ENCODE measurements at regions of chr13 and their contacts with region 1.

Region 1: DNA sequence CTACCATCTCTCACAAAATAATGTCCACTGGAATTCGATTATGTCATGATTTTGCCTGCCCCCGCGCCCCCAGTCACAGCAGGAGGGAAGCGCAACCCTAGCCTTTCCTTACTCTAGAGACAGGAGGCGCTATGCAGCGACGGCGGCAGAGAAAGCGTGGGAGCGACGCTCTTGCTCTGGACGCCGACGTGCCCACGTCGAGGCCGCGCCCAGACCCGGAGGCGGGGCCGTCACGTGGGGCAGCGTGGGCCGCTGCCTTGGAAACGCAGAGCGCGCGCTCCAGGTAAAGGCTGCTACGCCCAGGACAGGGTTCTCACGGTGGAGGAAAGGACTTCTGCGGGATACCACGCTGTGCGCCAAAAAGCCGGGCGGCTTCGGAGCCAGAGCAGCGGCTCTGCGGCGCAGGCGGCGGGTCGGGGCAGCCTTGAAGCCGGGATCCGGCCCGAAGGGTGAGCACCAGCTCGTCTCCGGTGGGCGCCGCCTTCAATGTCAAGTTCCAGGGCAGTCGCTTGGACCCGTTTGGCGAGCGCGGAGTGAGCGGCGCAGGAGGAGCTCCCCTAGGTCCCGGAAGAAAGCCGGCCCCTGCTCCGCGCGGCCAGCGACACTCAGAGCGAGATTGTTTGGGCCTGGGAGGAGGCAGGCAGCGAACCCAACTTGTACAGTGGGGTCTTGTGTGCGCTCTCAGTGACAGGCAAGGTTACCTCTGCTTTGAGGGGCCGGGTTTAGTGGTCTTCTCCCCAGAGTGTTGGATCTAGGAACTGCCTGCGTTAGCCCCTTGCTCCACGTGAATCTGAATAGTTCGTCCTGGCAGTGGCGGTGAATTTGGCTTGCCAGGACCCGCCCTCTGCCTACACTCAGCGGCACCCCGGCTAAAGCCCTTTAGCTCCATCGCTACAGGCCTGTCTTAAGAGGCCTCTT is 121.7 kb downstream of the MRPL57 start:
- DNase-seq: peak; percentile 90
- H3K4me3 ChIP-seq: peak overlapping the region; percentile 54 to 81 (median 70)
- H3K27ac ChIP-seq: no peak overlapping the region
- H3K4me1 ChIP-seq: peaks cover 12% of the 10 kb centered on the region
- H3K27me3 ChIP-seq: no peaks in the 10 kb centered on the region
- CTCF ChIP-seq: peak; percentile 89 to 90
- POLR2A ChIP-seq: peak; percentile 16

Region 2: DNA sequence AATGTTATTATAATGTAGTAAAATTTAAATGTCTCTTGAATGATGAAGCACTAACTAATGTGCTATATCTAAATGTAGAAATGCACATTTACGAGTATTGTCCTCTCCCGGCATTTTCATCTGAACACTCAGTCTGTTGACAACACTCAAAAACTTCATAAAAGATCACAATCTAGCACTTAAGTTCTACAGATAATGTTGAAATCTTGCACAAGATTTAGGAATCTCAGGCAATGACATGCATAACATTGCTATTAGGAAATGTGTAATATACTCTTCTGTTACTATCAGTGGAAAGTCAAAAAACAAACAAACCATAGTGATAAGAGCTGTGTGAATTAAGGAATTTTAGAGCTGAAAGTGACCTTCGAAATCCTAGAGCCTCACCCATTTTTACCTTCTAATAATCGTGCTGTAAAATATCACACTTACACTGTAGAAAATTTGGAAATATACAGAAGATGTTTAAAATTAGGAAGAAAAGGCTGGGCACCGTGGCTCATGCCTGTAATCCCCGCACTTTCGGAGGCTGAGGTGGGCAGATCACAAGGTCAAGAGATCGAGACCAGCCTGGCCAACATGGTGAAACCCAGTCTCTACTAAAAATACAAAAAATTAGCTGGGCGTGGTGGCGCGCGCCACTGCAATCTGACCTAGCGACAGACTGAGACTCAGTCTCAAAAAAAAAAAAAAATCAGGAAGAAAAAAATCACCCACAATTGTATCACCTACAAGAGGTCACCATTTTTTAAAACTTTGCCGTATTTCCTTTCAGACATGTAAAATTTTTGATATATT is 357.9 kb before region 1 on chr13:
- CTCF ChIA-PET with region 1: interaction called, 15 read pairs
- POLR2A ChIA-PET with region 1: interaction called, 11 read pairs
- dilution Hi-C with region 1: no loop called
- intact Hi-C with region 1: loop called (anchors 2 kb)
- DNase-seq: no peak
- H3K4me3 ChIP-seq: no peak overlapping the region
- H3K27ac ChIP-seq: no peak overlapping the region
- H3K4me1 ChIP-seq: no peaks in the 10 kb centered on the region
- H3K27me3 ChIP-seq: no peaks in the 10 kb centered on the region
- CTCF ChIP-seq: no peak
- POLR2A ChIP-seq: no peak

Region 3: GRCh38 chr13:21164631-21165030 is 133.5 kb before region 1 on chr13:
- CTCF ChIA-PET with region 1: no interaction called
- POLR2A ChIA-PET with region 1: no interaction called
- dilution Hi-C with region 1: no loop called
- intact Hi-C with region 1: no loop called
- DNase-seq: peak; percentile 40
- H3K4me3 ChIP-seq: no peak overlapping the region
- H3K27ac ChIP-seq: no peak overlapping the region
- H3K4me1 ChIP-seq: peaks cover 3% of the 10 kb centered on the region
- H3K27me3 ChIP-seq: no peaks in the 10 kb centered on the region
- CTCF ChIP-seq: no peak
- POLR2A ChIP-seq: no peak

Region 4: GRCh38 chr13:21402586-21403228 is 104.5 kb after region 1 on chr13:
- CTCF ChIA-PET with region 1: interaction called, 8 read pairs
- POLR2A ChIA-PET with region 1: no interaction called
- dilution Hi-C with region 1: no loop called
- intact Hi-C with region 1: loop called (anchors 1 kb)
- DNase-seq: peak; percentile 16
- H3K4me3 ChIP-seq: no peak overlapping the region
- H3K27ac ChIP-seq: no peak overlapping the region
- H3K4me1 ChIP-seq: peaks cover 28% of the 10 kb centered on the region
- H3K27me3 ChIP-seq: no peaks in the 10 kb centered on the region
- CTCF ChIP-seq: no peak
- POLR2A ChIP-seq: no peak

Region 5: DNA sequence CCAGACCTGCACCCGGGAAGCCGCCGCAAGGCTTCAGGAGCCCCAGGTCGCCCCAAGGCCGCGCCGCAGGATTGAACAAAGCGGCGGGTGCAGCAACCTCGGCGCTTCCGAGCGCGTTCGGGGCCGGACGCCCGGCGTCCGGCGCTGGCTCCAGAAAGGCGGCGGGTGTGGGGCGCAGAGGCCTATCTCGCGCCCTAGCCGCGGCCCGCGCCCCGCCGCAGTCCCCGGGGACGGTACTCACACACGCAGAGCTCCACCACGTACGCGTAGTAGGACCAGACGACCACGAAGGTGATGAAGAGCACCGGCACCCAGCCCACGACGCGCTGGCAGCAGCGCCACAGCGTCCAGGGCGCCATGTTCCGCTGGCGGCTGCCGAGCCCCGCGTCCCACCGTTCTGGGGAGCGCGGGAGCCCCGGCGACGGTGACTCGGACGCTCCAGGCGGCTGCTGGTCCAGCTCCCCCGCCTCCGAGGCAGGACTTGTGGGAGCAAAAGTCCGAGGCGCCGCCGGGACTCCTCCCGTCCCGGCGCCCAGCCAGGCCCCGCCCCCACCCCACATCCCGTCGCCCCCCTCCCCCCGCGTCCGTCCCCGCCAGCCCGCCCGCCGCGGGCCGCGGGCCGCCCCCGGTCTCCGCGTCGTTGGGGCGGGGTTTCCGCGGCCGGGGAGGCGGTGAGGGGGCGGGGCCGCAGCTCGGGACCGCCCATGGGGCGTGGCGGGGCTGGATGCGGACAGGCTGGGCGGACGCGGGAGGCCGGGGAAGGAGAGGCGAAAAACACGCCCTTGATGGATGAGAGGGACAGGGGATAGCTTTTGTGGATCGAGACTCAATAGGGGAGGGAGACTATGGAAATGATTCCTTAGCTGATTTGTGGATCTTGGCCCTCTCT is 160.9 kb after region 1 on chr13 and contains the start of gene ZDHHC20:
- CTCF ChIA-PET with region 1: interaction called, 15 read pairs
- POLR2A ChIA-PET with region 1: no interaction called
- dilution Hi-C with region 1: no loop called
- intact Hi-C with region 1: loop called (anchors 1 kb)
- DNase-seq: peak; percentile 82
- H3K4me3 ChIP-seq: peak within 1 kb of the TSS; percentile 89 to 98 (median 95)
- H3K27ac ChIP-seq: peak within 1 kb of the TSS; percentile 93
- H3K4me1 ChIP-seq: peaks cover 10% of the 10 kb centered on the region
- H3K27me3 ChIP-seq: no peaks in the 10 kb centered on the region
- CTCF ChIP-seq: no peak
- POLR2A ChIP-seq: peak; percentile 78
- total RNA-seq, gene ZDHHC20: 57.5 and 59.4 TPM in 2 replicates

Region 6: GRCh38 chr13:21670883-21671619 is 372.9 kb after region 1 on chr13 and contains the start of gene FGF9:
- CTCF ChIA-PET with region 1: no interaction called
- POLR2A ChIA-PET with region 1: no interaction called
- dilution Hi-C with region 1: no loop called
- intact Hi-C with region 1: loop called (anchors 5 kb)
- DNase-seq: peak; percentile 54
- H3K4me3 ChIP-seq: peak within 1 kb of the TSS; percentile 23 to 34 (median 32)
- H3K27ac ChIP-seq: no peak within 1 kb of the TSS
- H3K4me1 ChIP-seq: peaks cover 19% of the 10 kb centered on the region
- H3K27me3 ChIP-seq: peaks cover 46 to 74% of the 10 kb centered on the region in 2 experiments
- CTCF ChIP-seq: no peak
- POLR2A ChIP-seq: no peak
- total RNA-seq, gene FGF9: not detected in 2 replicates

Measured in endothelial cell of umbilical vein (primary cell).